Colonic mucosa (tissue), 4 donors: ENCODE measurements at regions of chr1 and their contacts with region 1.

Region 1: GRCh38 chr1:228131766-228132165 is 8.3 kb upstream of the GUK1 start:
- DNase-seq: no peak
- H3K4me3 ChIP-seq: no peak overlapping the region
- H3K27ac ChIP-seq: no peak overlapping the region
- H3K4me1 ChIP-seq: no peaks in the 10 kb centered on the region
- H3K27me3 ChIP-seq: peaks cover 3% of the 10 kb centered on the region
- CTCF ChIP-seq: no peak

Region 2: GRCh38 chr1:228174482-228175375 is 43.0 kb after region 1 on chr1:
- intact Hi-C with region 1: loop called (anchors 5 kb)
- DNase-seq: no peak
- H3K4me3 ChIP-seq: peak overlapping the region; percentile 16
- H3K27ac ChIP-seq: no peak overlapping the region
- H3K4me1 ChIP-seq: no peaks in the 10 kb centered on the region
- H3K27me3 ChIP-seq: no peaks in the 10 kb centered on the region
- CTCF ChIP-seq: no peak